ENCODE measurements at regions of chr13 and their contacts with region 1.

Region 1: DNA sequence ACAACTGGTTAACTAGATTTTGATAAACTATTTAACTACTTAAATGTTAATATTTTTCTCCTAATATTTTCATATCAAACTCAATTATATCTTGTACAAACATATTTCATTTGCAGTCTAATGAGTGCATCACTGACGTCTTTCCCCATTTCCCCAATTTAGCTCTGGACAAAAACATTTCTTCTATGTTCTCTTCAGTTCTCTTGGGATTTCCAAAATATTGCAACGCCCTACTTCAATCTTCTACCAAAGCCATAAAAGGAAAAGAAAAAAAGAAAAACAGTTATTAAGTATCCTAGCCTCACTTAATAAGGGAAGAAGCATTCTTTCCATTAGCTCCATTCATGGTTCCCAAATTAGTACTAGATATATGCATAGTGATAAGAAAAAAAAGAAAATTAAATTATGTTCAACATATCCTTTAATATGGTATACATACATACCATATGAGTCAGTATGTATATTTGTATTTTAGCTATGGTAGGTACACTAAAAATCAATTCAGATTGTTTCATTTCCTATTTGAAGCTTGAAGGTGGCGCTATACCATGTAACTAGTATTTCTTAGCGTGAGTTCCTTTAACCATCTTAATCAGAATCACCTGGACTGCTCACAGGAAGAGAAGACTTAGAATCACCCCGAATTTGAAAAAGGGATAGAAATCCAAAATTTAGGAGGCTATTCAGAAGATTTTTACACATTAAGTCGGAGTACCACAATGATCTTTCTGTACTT is 9.9 kb downstream of the FBXL3 start:
- DNase-seq: no peak
- H3K4me3 ChIP-seq: no peak overlapping the region
- H3K4me3 Mint-ChIP-seq: peak overlapping the region in 2 of 8 donors; percentile 5 to 23
- H3K27ac ChIP-seq: no peak overlapping the region
- H3K27ac Mint-ChIP-seq: peak overlapping the region in 5 of 7 donors; percentile 4 to 82 (median 65)
- H3K4me1 ChIP-seq: peaks cover 65% of the 10 kb centered on the region
- H3K4me1 Mint-ChIP-seq: peaks cover 44 to 75% (median 60%) of the 10 kb centered on the region in 4 donors
- H3K27me3 ChIP-seq: no peaks in the 10 kb centered on the region
- H3K27me3 Mint-ChIP-seq: no peaks in the 10 kb centered on the region

Region 2: DNA sequence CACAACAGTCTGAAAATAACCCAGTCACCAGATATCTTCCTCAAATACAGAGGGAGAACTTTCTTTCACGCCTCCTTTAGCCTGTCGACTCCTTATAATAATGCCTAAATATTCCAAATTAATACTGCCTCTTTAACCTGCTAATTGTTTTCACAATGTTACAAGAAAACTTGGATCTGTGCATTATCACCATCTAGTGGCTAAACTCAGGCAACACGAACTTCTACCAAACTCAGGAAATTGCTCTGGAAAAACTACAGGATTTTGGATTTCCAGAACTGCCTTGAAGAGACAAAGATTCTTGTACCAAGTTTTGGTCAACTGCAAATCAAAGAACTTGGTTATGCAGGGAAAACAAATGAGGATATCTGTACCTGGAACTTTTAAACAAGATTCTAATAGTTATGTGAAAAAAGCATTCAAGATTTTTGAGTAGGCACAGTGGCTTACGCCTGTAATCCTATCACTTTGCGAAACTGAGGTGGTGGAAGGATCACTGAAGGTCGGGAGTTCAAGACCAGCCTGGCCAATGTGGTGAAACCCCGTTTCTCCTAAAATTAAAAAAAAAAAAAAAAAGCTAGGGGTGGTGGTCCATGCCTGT is 14.4 kb before region 1 on chr13:
- CTCF ChIA-PET with region 1: interaction called, 17 read pairs
- POLR2A ChIA-PET with region 1: interaction called, 3 read pairs
- intact Hi-C with region 1: no loop called
- DNase-seq: peak in 1 of 5 donors; percentile 19
- H3K4me3 ChIP-seq: no peak overlapping the region
- H3K4me3 Mint-ChIP-seq: no peak overlapping the region
- H3K27ac ChIP-seq: no peak overlapping the region
- H3K27ac Mint-ChIP-seq: peak overlapping the region; percentile 5 to 85 (median 30)
- H3K4me1 ChIP-seq: peaks cover 43% of the 10 kb centered on the region
- H3K4me1 Mint-ChIP-seq: peaks cover 25 to 44% (median 35%) of the 10 kb centered on the region in 4 donors
- H3K27me3 ChIP-seq: no peaks in the 10 kb centered on the region
- H3K27me3 Mint-ChIP-seq: no peaks in the 10 kb centered on the region